ENCODE measurements at regions of chr10 and their contacts with region 1.

Region 1: GRCh38 chr10:131981429-131982184 is at the start of gene BNIP3:
- DNase-seq: peak; percentile 86 to 99 (median 92)

Region 2: DNA sequence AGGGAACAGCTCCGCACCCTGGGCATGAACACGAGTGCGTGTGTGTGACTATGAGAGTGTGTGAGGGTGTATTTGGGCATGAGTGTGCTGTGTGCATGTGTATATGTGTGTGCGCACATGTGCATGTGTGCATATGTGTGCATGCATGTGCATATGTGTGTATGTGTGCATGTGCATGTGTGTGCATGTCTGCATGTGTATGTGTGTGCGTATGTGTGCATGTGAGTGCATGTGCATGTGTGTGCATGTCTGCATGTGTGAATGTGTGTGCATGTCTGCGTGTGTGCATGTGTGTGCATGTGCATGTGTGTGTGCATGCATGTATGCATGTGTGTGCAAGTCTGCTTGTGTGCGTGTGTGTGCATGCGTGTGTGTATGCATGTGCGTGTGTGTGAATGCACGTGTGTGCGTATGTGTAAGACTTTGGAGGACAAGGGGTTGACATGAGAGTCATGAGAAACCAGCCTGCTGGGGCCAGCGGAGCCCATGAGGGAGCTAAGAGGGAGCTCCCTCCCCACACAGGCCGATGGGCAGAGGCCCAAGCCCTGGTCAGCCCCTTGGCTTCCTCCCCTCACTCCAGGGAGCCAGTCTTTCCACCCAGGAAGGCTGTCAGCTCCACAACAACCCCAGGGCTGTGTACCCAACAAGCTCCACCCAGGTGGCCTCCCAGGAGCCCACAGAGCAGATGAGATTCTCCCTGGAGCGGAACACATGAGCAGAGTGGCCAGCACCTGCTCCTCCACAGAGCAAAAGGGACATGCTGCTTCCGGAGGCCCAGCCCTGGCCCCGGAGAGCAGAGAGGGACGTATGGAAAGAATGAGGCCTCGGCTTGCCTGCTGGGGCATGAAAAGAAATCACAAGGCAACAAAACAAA is 223.3 kb before region 1 on chr10:
- intact Hi-C with region 1: no loop called
- DNase-seq: peak in 2 of 10 donors; percentile 43 to 69

Region 3: GRCh38 chr10:131900350-131901146 is 81.1 kb before region 1 on chr10 and contains the start of gene PPP2R2D:
- intact Hi-C with region 1: loop called (anchors 5 kb)
- DNase-seq: peak; percentile 92 to 99 (median 94)